Sciatic nerve (tissue), 2 donors: ENCODE measurements at regions of chr2 and their contacts with region 1.

Region 1: GRCh38 chr2:202172439-202173211 is 65.8 kb downstream of the SUMO1 start:
- DNase-seq: no peak
- ATAC-seq: peak; percentile 59

Region 2: GRCh38 chr2:201344663-201345366 is 827.8 kb before region 1 on chr2:
- intact Hi-C with region 1: no loop called
- DNase-seq: no peak
- ATAC-seq: no peak

Region 3: DNA sequence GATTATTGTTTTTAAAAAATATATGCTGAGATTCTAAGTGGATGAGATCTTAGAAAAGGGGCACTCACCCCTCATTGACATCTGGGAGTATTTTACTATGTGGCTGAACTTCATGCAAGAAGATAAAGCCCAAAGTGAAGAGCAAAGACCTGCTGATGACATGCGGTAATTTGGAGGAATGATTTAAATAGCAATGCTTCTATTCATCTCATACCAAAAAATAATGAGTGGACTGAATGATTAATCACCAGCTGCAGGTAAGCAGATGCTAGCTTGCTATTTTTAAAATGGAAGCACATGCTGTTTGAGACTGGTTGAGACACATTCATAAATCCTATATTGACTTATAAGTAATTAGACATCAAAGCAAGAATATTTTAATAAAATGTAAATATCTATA is 379.0 kb before region 1 on chr2:
- intact Hi-C with region 1: loop called (anchors 5 kb)
- DNase-seq: no peak
- ATAC-seq: no peak

Region 4: GRCh38 chr2:201860636-201861066 is 312.0 kb before region 1 on chr2:
- intact Hi-C with region 1: loop called (anchors 5 kb)
- DNase-seq: no peak
- ATAC-seq: peak; percentile 89